Left colon (tissue), 2 donors: ENCODE measurements at regions of chr4 and their contacts with region 1.

Region 1: DNA sequence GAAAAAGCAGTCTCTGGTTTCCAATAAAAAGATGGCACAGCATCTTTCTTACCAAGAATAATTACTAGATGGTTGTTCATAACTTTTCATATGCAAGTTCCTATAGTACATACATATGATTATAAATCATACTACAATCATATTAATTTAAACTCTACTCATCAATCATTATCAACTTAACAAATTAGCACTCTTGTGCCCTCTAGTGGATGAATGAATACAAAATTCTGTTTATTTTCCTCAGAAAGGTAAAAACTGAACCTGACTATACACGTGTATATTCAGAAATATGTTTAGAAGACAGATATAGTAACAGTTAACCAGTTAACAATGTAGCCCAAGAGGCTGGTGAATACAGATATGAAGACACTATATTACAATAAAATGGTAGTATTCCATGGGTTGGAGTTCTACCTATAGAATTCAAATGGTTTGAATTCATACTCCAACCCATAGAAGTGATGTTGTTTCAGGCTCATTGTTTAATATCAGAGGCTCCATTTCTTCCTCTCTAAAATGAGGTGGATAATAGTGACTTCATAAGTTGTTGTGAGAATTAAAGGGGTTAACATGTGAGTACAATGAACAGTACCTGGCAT is 100.0 kb downstream of the ADAMTS3 start:
- DNase-seq: no peak
- ATAC-seq: no peak

Region 2: DNA sequence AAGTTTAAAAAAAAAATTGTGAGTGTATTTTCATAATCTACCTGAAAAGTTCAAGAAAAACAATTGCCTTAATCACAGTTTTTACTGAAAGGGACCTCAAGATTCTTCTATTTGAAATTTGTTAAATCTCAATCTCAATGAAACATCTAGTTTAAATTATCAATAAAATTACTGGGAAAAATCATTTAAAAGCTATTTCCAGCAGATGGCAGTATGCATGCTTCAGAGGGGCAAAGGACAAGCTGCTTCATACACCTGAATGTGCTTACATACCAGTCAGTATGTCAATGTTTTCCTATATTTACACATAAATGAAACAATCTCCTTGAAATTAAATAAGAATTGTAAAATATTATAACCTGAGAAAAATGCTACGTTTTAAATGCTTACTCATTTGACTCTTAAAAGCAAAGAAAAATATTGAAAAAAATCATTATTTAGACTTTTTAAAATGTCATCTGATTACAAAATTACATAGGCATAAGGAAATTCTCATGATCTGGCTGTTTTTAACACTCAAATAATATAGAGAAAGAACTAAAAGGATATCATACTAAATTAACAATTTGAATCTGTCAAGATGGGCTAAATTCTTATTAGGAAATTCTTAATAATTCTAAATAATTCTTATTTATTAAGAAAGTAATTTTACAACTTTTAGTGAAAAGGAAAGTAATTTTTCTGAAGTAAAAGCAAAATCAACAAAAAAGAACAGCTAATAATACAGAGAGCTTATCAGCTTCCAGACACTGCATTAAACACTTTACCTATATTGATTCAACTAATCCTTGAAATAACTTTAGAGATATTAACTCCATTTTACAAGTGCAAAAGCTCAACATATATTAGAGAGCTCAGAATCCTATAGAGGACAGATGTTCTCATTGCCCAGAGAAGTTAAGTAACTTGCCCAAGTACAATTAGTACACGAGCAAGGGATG is 142.0 kb before region 1 on chr4:
- intact Hi-C with region 1: loop called in 1 of 2 experiments (anchors 10 kb)
- DNase-seq: no peak
- ATAC-seq: peak; percentile 58